ENCODE measurements at regions of chr15 and their contacts with region 1.

Region 1: GRCh38 chr15:40782580-40783227 is 12.9 kb downstream of the C15orf62 start:
- DNase-seq: peak; percentile 53 to 86 (median 83)
- ATAC-seq: peak; percentile 93
- H3K4me3 ChIP-seq: no peak overlapping the region
- H3K4me3 Mint-ChIP-seq: no peak overlapping the region
- H3K27ac ChIP-seq: no peak overlapping the region
- H3K27ac Mint-ChIP-seq: no peak overlapping the region
- H3K4me1 ChIP-seq: peaks cover 14% of the 10 kb centered on the region
- H3K4me1 Mint-ChIP-seq: peaks cover 19% of the 10 kb centered on the region
- H3K27me3 ChIP-seq: no peaks in the 10 kb centered on the region
- H3K27me3 Mint-ChIP-seq: no peaks in the 10 kb centered on the region
- CTCF ChIP-seq: peak; percentile 79

Region 2: GRCh38 chr15:39202641-39203040 is 1580.1 kb before region 1 on chr15:
- CTCF ChIA-PET with region 1: no interaction called
- POLR2A ChIA-PET with region 1: no interaction called
- intact Hi-C with region 1: no loop called
- DNase-seq: no peak
- ATAC-seq: no peak
- H3K4me3 ChIP-seq: no peak overlapping the region
- H3K4me3 Mint-ChIP-seq: no peak overlapping the region
- H3K27ac ChIP-seq: no peak overlapping the region
- H3K27ac Mint-ChIP-seq: no peak overlapping the region
- H3K4me1 ChIP-seq: no peaks in the 10 kb centered on the region
- H3K4me1 Mint-ChIP-seq: no peaks in the 10 kb centered on the region
- H3K27me3 ChIP-seq: no peaks in the 10 kb centered on the region
- H3K27me3 Mint-ChIP-seq: peaks cover 5% of the 10 kb centered on the region
- CTCF ChIP-seq: no peak

Region 3: DNA sequence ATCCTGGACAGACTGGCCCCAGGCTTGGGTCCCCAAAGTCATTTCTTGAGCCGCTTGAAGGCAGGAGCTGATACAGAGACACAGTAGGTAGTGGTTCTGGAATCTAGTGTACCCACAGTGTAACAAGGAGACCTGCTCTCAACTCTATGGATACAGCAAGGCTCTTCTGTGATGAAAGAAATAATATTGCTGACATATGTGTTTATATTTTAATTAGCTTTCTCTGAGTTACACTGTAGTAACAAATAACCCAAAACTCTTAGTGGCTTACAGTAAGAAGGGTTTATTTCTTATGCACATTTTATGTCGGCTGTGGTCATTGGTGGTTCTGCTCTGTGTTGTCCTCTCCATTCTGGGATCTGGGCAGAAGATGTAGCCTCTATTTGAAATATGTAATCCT is 266.4 kb before region 1 on chr15:
- CTCF ChIA-PET with region 1: no interaction called
- POLR2A ChIA-PET with region 1: no interaction called
- intact Hi-C with region 1: loop called in 1 of 2 experiments (anchors 1 kb)
- DNase-seq: no peak
- ATAC-seq: no peak
- H3K4me3 ChIP-seq: no peak overlapping the region
- H3K4me3 Mint-ChIP-seq: no peak overlapping the region
- H3K27ac ChIP-seq: no peak overlapping the region
- H3K27ac Mint-ChIP-seq: no peak overlapping the region
- H3K4me1 ChIP-seq: peaks cover 8% of the 10 kb centered on the region
- H3K4me1 Mint-ChIP-seq: peaks cover 14% of the 10 kb centered on the region
- H3K27me3 ChIP-seq: peaks cover 6 to 7% of the 10 kb centered on the region in 2 experiments
- H3K27me3 Mint-ChIP-seq: peaks cover 20% of the 10 kb centered on the region
- CTCF ChIP-seq: no peak

Region 4: DNA sequence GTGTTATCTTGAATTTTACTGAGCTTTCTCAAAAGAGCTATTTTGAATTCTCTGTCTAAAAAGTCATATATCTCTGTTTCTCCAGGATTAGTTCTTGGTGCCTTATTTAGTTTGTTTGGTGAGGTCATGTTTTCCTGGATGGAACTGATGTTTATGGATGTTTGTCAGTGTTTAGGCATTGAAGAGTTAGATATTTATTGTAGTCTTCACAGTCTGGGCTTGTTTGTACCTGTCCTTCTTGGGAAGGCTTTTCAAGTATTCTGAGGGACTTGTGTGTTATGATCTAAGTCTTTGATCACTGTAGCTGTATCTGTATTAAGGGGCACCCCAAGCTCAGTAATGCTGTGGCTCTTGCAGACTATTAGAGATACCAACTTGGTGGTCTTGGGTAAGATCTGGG is 98.3 kb before region 1 on chr15:
- CTCF ChIA-PET with region 1: interaction called, 69 read pairs
- POLR2A ChIA-PET with region 1: interaction called, 3 read pairs
- intact Hi-C with region 1: loop called (anchors 1 to 5 kb)
- DNase-seq: no peak
- ATAC-seq: no peak
- H3K4me3 ChIP-seq: no peak overlapping the region
- H3K4me3 Mint-ChIP-seq: no peak overlapping the region
- H3K27ac ChIP-seq: no peak overlapping the region
- H3K27ac Mint-ChIP-seq: peak overlapping the region; percentile 8
- H3K4me1 ChIP-seq: no peaks in the 10 kb centered on the region
- H3K4me1 Mint-ChIP-seq: no peaks in the 10 kb centered on the region
- H3K27me3 ChIP-seq: no peaks in the 10 kb centered on the region
- H3K27me3 Mint-ChIP-seq: no peaks in the 10 kb centered on the region
- CTCF ChIP-seq: no peak

Region 5: DNA sequence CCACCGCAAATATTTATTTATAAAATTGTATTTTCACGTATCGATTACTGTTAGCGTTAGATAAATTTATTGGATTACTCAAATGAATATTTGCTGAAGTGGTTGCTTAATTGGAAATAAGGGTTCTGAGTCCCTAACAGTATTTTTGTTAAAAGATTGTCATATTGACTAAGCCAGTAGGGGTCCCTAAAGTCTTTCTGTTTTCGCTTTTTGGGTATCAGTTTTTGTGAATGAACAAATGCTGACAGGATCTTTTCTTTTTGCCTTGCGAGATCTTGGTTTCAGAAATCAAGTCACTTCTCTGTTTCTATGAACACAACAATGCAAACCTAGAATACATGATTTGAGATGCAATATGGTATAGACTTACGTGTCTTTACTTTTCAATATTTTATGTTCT is 80.6 kb before region 1 on chr15:
- CTCF ChIA-PET with region 1: interaction called, 22 read pairs
- POLR2A ChIA-PET with region 1: no interaction called
- intact Hi-C with region 1: loop called (anchors 1 kb)
- DNase-seq: peak in 2 of 9 experiments; percentile 46 to 59
- ATAC-seq: no peak
- H3K4me3 ChIP-seq: no peak overlapping the region
- H3K4me3 Mint-ChIP-seq: no peak overlapping the region
- H3K27ac ChIP-seq: no peak overlapping the region
- H3K27ac Mint-ChIP-seq: no peak overlapping the region
- H3K4me1 ChIP-seq: no peaks in the 10 kb centered on the region
- H3K4me1 Mint-ChIP-seq: no peaks in the 10 kb centered on the region
- H3K27me3 ChIP-seq: no peaks in the 10 kb centered on the region
- H3K27me3 Mint-ChIP-seq: no peaks in the 10 kb centered on the region
- CTCF ChIP-seq: peak; percentile 38

Region 6: GRCh38 chr15:40754883-40755811 is 27.6 kb before region 1 on chr15 and contains the start of gene RMDN3:
- CTCF ChIA-PET with region 1: interaction called, 10 read pairs
- POLR2A ChIA-PET with region 1: no interaction called
- intact Hi-C with region 1: loop called (anchors 1 to 2 kb)
- DNase-seq: peak; percentile 84 to 96 (median 93)
- ATAC-seq: peak; percentile 95
- H3K4me3 ChIP-seq: peak within 1 kb of the TSS; percentile 99
- H3K4me3 Mint-ChIP-seq: peak within 1 kb of the TSS; percentile 94
- H3K27ac ChIP-seq: peak within 1 kb of the TSS; percentile 91 to 94
- H3K27ac Mint-ChIP-seq: peak within 1 kb of the TSS; percentile 94
- H3K4me1 ChIP-seq: peaks cover 6% of the 10 kb centered on the region
- H3K4me1 Mint-ChIP-seq: peaks cover 26% of the 10 kb centered on the region
- H3K27me3 ChIP-seq: no peaks in the 10 kb centered on the region
- H3K27me3 Mint-ChIP-seq: no peaks in the 10 kb centered on the region
- CTCF ChIP-seq: no peak
- total RNA-seq, gene RMDN3: 26.7 to 30.5 TPM

Region 7: GRCh38 chr15:40793216-40793989 is 10.7 kb after region 1 on chr15:
- CTCF ChIA-PET with region 1: interaction called, 14 read pairs
- POLR2A ChIA-PET with region 1: no interaction called
- intact Hi-C with region 1: no loop called
- DNase-seq: no peak
- ATAC-seq: no peak
- H3K4me3 ChIP-seq: no peak overlapping the region
- H3K4me3 Mint-ChIP-seq: no peak overlapping the region
- H3K27ac ChIP-seq: no peak overlapping the region
- H3K27ac Mint-ChIP-seq: no peak overlapping the region
- H3K4me1 ChIP-seq: no peaks in the 10 kb centered on the region
- H3K4me1 Mint-ChIP-seq: peaks cover 14% of the 10 kb centered on the region
- H3K27me3 ChIP-seq: no peaks in the 10 kb centered on the region
- H3K27me3 Mint-ChIP-seq: no peaks in the 10 kb centered on the region
- CTCF ChIP-seq: no peak